IMR-90 (cell line): ENCODE measurements at regions of chr16 and their contacts with region 1.

Region 1: DNA sequence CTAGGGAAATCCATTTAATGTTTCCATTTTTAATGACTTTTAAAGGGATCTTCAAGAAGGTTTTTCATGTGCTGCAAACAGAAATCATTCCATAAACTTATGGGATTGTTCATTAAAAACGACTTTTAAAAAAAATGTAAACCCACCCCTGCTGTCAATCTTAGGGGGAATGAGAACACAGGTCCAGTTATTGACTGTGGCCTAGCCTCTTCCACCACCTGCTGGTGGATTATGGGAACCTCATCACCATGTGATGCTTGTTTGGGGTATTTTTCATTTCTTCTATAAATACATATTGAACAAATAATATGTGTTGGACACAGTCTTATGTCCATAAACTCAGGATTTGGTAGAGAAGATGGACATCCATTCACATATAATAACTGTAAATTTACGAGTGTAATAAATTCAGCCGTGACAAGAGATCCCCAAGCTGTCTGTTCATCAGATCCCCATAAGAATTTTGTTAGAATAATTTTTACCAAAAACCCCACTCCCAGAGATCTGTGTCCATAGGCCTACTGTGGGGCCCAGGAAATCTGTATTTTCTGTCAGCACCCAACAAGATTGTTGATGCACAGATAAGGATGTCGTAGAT is 42.0 kb upstream of the TMC5 start:
- DNase-seq: peak; percentile 56
- ATAC-seq: peak; percentile 96
- H3K4me3 ChIP-seq: no peak overlapping the region
- H3K27ac ChIP-seq: no peak overlapping the region
- H3K4me1 ChIP-seq: no peaks in the 10 kb centered on the region
- H3K27me3 ChIP-seq: peaks cover 4% of the 10 kb centered on the region
- CTCF ChIP-seq: peak; percentile 92
- POLR2A ChIP-seq: 0 out of 2 replicates have a peak, but pooled peaks have one; percentile 29
- RAD21 ChIP-seq: peak; percentile 96

Region 2: DNA sequence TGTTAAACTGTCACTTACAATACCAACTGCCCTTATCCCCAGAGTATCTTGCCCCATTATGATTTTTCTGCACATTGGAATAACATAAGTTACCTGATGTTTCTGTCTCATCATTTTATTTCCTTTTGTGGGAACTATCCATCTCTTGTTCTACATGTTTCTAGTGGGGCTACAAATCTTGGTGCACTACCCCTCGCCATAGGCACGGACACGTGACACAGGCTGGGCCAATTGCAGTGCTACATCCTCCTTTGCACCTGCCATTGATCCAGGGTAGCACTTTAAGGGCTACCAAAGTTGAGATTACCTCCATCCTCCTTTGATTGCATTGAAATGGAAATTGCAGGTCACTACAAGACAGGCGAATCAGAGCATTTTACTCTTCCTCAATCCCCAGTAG is 221.8 kb before region 1 on chr16:
- CTCF ChIA-PET with region 1: no interaction called
- POLR2A ChIA-PET with region 1: no interaction called
- dilution Hi-C with region 1: no loop called
- in situ Hi-C with region 1: loop called (anchors 10 kb)
- intact Hi-C with region 1: no loop called
- DNase-seq: peak; percentile 13
- ATAC-seq: no peak
- H3K4me3 ChIP-seq: no peak overlapping the region
- H3K27ac ChIP-seq: no peak overlapping the region
- H3K4me1 ChIP-seq: no peaks in the 10 kb centered on the region
- H3K27me3 ChIP-seq: peaks cover 22% of the 10 kb centered on the region
- CTCF ChIP-seq: no peak
- POLR2A ChIP-seq: no peak
- RAD21 ChIP-seq: no peak

Region 3: GRCh38 chr16:19167710-19168370 is 207.8 kb before region 1 on chr16 and contains the start of gene SYT17:
- CTCF ChIA-PET with region 1: no interaction called
- POLR2A ChIA-PET with region 1: no interaction called
- dilution Hi-C with region 1: no loop called
- in situ Hi-C with region 1: no loop called
- intact Hi-C with region 1: loop called (anchors 1 kb)
- DNase-seq: peak; percentile 48
- ATAC-seq: peak; percentile 97
- H3K4me3 ChIP-seq: peak within 1 kb of the TSS; percentile 43
- H3K27ac ChIP-seq: no peak within 1 kb of the TSS
- H3K4me1 ChIP-seq: peaks cover 2% of the 10 kb centered on the region
- H3K27me3 ChIP-seq: peaks cover 35% of the 10 kb centered on the region
- CTCF ChIP-seq: peak; percentile 79
- POLR2A ChIP-seq: no peak
- RAD21 ChIP-seq: peak; percentile 71
- total RNA-seq, gene SYT17: not detected in 2 replicates

Region 4: GRCh38 chr16:19359556-19359955 is 16.1 kb before region 1 on chr16:
- CTCF ChIA-PET with region 1: no interaction called
- POLR2A ChIA-PET with region 1: no interaction called
- dilution Hi-C with region 1: no loop called
- in situ Hi-C with region 1: no loop called
- intact Hi-C with region 1: no loop called
- DNase-seq: no peak
- ATAC-seq: no peak
- H3K4me3 ChIP-seq: no peak overlapping the region
- H3K27ac ChIP-seq: no peak overlapping the region
- H3K4me1 ChIP-seq: no peaks in the 10 kb centered on the region
- H3K27me3 ChIP-seq: no peaks in the 10 kb centered on the region
- CTCF ChIP-seq: no peak
- POLR2A ChIP-seq: no peak
- RAD21 ChIP-seq: no peak